ENCODE measurements at regions of chr22 and their contacts with region 1.

Region 1: DNA sequence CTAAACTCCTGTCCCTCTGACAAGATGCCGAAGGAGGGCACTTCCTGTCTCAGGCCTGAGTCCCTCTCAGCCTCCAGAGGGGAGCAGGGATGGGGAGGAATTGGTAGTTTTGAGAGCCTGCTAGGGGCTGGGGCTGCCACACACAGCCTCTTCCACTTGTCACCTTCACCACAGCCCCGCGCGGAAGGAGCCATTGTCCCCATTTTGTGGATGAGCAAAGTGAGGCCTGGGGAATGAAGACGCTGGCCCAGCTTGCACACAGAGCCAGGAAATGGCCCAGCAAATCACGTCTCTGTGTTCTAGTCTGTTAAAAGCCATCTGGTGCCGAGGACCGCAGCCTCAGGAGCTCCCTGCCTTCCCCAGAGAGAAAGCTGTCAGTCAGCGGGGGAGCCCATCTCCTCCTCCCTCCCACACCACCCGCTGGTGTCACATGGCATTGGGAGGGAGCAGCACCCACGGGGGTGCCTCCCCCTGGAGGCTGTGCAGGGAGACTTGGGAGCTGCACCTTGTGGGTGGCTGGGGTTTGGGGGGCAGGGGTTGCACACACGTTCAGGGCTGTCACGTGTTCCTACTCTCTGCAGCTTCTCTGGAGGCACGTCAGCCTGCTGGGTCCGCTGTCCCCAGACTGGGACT is 34.6 kb downstream of the RASD2 start:
- DNase-seq: no peak
- ATAC-seq: peak in 4 of 8 donors; percentile 7 to 18 (median 14)
- H3K4me3 ChIP-seq: no peak overlapping the region
- H3K27ac ChIP-seq: no peak overlapping the region
- H3K4me1 ChIP-seq: peaks cover 0 to 9% (median 0%) of the 10 kb centered on the region in 9 donors
- H3K27me3 ChIP-seq: no peaks in the 10 kb centered on the region
- CTCF ChIP-seq: no peak

Region 2: DNA sequence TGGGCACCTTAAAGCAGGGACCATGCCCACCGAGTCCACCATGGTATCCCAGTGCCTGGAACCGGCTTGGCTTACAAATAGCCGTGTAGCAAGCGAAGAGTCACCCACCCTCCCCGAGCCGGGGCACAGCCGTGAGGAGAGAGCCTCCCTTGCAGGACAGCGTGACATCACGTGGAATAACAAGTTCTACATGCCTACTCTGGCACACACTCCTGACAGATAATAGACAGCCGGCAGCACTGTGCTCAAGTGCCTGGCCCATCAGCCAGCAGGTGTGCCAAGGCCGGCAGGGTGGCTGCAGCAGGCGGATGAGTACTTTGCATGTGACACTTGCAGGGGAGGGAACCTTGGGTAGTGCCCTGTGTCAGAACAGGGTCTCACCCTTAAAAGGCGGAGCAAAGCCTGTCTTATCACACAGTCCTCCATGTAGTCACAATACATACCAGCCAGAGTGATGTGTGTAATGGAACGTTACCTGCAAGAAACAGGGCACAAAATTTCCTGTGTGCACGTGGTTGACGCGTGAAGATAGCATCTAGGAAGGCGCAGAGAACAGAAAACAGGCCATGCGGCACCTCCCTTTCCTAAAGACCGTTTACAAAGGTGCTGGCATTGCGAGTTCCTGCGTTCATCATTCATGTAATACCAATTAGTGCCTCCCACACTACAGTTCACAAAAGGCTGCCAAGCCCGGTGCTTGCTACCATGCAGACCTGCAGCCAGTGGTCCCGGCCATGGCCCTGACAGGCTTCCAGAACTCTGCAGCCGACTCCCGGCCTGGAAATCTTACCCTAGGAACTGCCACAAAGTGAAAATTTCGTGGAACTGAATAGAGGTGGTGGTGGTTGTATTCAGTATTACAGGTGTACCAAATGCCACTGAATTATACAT is 259.1 kb before region 1 on chr22:
- intact Hi-C with region 1: no loop called
- DNase-seq: peak; percentile 65 to 68
- ATAC-seq: peak; percentile 60 to 85 (median 70)
- H3K4me3 ChIP-seq: no peak overlapping the region
- H3K27ac ChIP-seq: peak overlapping the region; percentile 81 to 93 (median 86)
- H3K4me1 ChIP-seq: peaks cover 14 to 62% (median 50%) of the 10 kb centered on the region in 9 donors
- H3K27me3 ChIP-seq: no peaks in the 10 kb centered on the region
- CTCF ChIP-seq: no peak

Region 3: GRCh38 chr22:35524966-35525686 is 50.1 kb before region 1 on chr22:
- intact Hi-C with region 1: loop called in 1 of 10 experiments (anchors 5 kb)
- DNase-seq: peak; percentile 45
- ATAC-seq: peak in 7 of 8 donors; percentile 49 to 74 (median 69)
- H3K4me3 ChIP-seq: no peak overlapping the region
- H3K27ac ChIP-seq: peak overlapping the region in 7 of 10 donors; percentile 17 to 64 (median 28)
- H3K4me1 ChIP-seq: peaks cover 0 to 13% (median 0%) of the 10 kb centered on the region in 9 donors
- H3K27me3 ChIP-seq: peaks cover 0 to 18% (median 3%) of the 10 kb centered on the region in 7 donors
- CTCF ChIP-seq: no peak